Activated T-helper 2 cell treated with anti-CD3 and anti-CD28 coated beads, Interferon-gamma antibody, Interleukin-2, Interleukin-4, amounts not matched to agents 10 μg/mL and 5 μg/mL and 100 μg/mL, durations not matched to agents 14 hours and 24 hours and 36 hours (primary cell): ENCODE measurements at regions of chr2 and their contacts with region 1.

Region 1: GRCh38 chr2:216139884-216140283 is 30.7 kb downstream of the XRCC5 start:
- DNase-seq: no peak
- H3K4me3 Mint-ChIP-seq: no peak overlapping the region
- H3K27ac Mint-ChIP-seq: no peak overlapping the region
- H3K4me1 Mint-ChIP-seq: peaks cover 38% of the 10 kb centered on the region
- H3K27me3 Mint-ChIP-seq: no peaks in the 10 kb centered on the region

Region 2: DNA sequence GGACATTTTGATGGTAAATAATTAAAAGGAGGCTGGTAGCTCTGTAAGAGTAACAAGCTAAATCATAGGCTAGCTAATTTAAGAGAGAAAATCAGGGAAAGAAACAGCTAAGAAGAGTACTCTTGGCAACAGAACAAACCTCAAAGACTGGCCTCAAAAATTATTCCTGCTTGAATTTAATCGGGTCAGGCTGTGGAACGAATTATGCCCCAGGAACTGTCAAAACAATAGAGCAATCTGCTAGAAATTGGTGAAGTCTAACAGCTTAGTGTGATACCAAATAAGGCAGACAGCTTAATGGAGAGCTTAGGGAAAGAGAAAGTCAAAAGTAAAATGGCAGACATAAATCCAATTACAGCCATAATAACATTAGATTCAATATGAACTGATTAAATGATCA is 342.2 kb before region 1 on chr2:
- intact Hi-C with region 1: no loop called
- DNase-seq: no peak
- H3K4me3 Mint-ChIP-seq: no peak overlapping the region
- H3K27ac Mint-ChIP-seq: no peak overlapping the region
- H3K4me1 Mint-ChIP-seq: peaks cover 27% of the 10 kb centered on the region
- H3K27me3 Mint-ChIP-seq: no peaks in the 10 kb centered on the region

Region 3: GRCh38 chr2:216114714-216115557 is 24.9 kb before region 1 on chr2:
- intact Hi-C with region 1: loop called (anchors 2 kb)
- DNase-seq: peak; percentile 94
- H3K4me3 Mint-ChIP-seq: peak overlapping the region; percentile 86
- H3K27ac Mint-ChIP-seq: peak overlapping the region; percentile 77
- H3K4me1 Mint-ChIP-seq: peaks cover 77% of the 10 kb centered on the region
- H3K27me3 Mint-ChIP-seq: no peaks in the 10 kb centered on the region

Region 4: DNA sequence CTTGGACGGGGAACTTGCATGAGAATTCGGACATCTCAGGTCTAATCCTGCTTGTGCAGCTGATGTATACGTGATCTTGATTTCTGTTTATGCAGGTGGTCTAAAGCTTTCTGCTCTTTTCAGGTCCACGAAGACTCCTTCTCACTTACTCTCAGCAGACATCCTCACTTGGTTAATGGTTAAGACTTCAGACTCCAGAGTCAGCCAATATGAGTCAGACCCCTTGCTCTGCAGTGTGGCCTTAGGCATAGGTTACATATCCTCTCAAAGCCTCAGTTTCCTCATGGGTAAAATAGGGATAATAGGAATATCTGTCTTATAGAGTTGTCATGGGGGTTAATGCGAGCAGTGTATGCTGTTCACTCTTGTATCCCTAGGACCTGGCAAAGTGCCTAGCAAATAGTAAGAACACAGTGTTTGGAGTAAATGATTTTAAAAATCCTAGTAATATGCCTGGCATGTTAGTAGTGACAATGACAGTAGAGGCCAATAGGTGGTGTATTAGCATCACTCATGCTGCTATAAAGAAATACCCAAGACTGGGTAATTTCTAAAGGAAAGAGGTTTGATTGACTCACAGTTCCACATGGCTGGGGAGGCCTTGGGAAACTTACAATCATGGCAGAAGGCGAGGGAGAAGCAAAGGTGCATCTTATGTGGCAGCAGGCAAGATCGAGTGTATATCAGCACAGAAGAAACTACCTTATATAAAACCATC is 11.6 kb after region 1 on chr2:
- intact Hi-C with region 1: no loop called
- DNase-seq: no peak
- H3K4me3 Mint-ChIP-seq: no peak overlapping the region
- H3K27ac Mint-ChIP-seq: peak overlapping the region; percentile 45
- H3K4me1 Mint-ChIP-seq: peaks cover 21% of the 10 kb centered on the region
- H3K27me3 Mint-ChIP-seq: no peaks in the 10 kb centered on the region

Region 5: GRCh38 chr2:216170076-216170763 is 30.3 kb after region 1 on chr2:
- intact Hi-C with region 1: loop called (anchors 5 kb)
- DNase-seq: no peak
- H3K4me3 Mint-ChIP-seq: no peak overlapping the region
- H3K27ac Mint-ChIP-seq: no peak overlapping the region
- H3K4me1 Mint-ChIP-seq: peaks cover 20% of the 10 kb centered on the region
- H3K27me3 Mint-ChIP-seq: no peaks in the 10 kb centered on the region